A549 (cell line): ENCODE measurements at regions of chr15 and their contacts with region 1.

Region 1: GRCh38 chr15:84716036-84716799 is at the start of gene SEC11A:
- DNase-seq: peak; percentile 98 to 100
- ATAC-seq: peak; percentile 98 to 99
- H3K4me3 ChIP-seq: peak within 1 kb of the TSS; percentile 91
- H3K27ac ChIP-seq: peak within 1 kb of the TSS; percentile 91 to 99
- H3K4me1 ChIP-seq: peaks cover 19% of the 10 kb centered on the region
- CTCF ChIP-seq: no peak
- EP300 ChIP-seq: no peak
- POLR2A ChIP-seq: peak; percentile 94
- RAD21 ChIP-seq: no peak; a peak in 2 of 5 replicates
- polyA plus RNA-seq, gene SEC11A: 237 and 490 TPM in 2 replicates

Region 2: GRCh38 chr15:84633311-84634227 is 82.6 kb before region 1 on chr15:
- CTCF ChIA-PET with region 1: no interaction called
- POLR2A ChIA-PET with region 1: interaction called, 12 read pairs
- DNase-seq: peak in 1 of 2 experiments; percentile 78
- ATAC-seq: peak; percentile 72 to 77
- H3K4me3 ChIP-seq: peak overlapping the region; percentile 51
- H3K27ac ChIP-seq: peak overlapping the region; percentile 63 to 87
- H3K4me1 ChIP-seq: peaks cover 24% of the 10 kb centered on the region; the same call in 2 of the 3 replicates
- CTCF ChIP-seq: peak; percentile 31; the same call in 2 of the 3 replicates
- EP300 ChIP-seq: no peak
- POLR2A ChIP-seq: peak; percentile 35
- RAD21 ChIP-seq: no peak; a peak in 2 of 5 replicates

Region 3: DNA sequence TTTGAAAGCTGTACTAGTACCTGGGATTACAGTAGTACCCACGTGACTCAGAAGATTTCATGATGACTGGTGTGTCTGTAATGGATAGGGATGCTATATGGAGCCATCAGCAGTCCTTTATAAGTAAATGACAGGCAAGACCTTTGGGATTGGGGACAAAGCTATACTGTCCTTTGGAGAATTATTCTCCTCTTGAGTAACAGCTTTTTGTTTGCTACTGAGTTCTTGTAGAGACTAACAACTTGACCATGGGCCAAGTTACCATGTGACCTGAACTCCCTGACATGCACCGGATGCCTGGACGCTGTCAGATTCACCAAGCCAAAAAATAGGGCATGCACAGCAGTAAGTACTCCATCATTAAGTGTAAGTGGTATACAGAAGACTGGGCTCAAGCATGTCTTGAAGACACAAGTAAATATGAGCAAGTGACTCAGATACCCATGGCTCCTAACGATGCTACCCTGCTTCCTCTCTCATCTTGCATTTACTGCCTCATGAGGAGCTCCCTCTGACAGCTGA is 13.2 kb before region 1 on chr15:
- CTCF ChIA-PET with region 1: interaction called, 6 read pairs
- POLR2A ChIA-PET with region 1: interaction called, 20 read pairs
- DNase-seq: no peak
- ATAC-seq: peak; percentile 23 to 37; a peak in 3 of 6 replicates
- H3K4me3 ChIP-seq: no peak overlapping the region
- H3K27ac ChIP-seq: no peak overlapping the region
- H3K4me1 ChIP-seq: peaks cover 24% of the 10 kb centered on the region
- CTCF ChIP-seq: no peak
- EP300 ChIP-seq: no peak
- POLR2A ChIP-seq: no peak
- RAD21 ChIP-seq: no peak

Region 4: GRCh38 chr15:84734794-84735479 is 18.7 kb after region 1 on chr15:
- CTCF ChIA-PET with region 1: interaction called, 27 read pairs
- POLR2A ChIA-PET with region 1: interaction called, 119 read pairs
- DNase-seq: peak; percentile 88 to 93
- ATAC-seq: peak; percentile 88 to 95
- H3K4me3 ChIP-seq: peak overlapping the region; percentile 7; the same call in 2 of the 3 replicates
- H3K27ac ChIP-seq: peak overlapping the region; percentile 82 to 91
- H3K4me1 ChIP-seq: peaks cover 41% of the 10 kb centered on the region
- CTCF ChIP-seq: no peak
- EP300 ChIP-seq: peak in 1 of 2 experiments; percentile 43; a peak in 2 of 5 replicates
- POLR2A ChIP-seq: peak; percentile 35
- RAD21 ChIP-seq: peak in 1 of 2 experiments; percentile 36; a peak in 2 of 5 replicates

Region 5: DNA sequence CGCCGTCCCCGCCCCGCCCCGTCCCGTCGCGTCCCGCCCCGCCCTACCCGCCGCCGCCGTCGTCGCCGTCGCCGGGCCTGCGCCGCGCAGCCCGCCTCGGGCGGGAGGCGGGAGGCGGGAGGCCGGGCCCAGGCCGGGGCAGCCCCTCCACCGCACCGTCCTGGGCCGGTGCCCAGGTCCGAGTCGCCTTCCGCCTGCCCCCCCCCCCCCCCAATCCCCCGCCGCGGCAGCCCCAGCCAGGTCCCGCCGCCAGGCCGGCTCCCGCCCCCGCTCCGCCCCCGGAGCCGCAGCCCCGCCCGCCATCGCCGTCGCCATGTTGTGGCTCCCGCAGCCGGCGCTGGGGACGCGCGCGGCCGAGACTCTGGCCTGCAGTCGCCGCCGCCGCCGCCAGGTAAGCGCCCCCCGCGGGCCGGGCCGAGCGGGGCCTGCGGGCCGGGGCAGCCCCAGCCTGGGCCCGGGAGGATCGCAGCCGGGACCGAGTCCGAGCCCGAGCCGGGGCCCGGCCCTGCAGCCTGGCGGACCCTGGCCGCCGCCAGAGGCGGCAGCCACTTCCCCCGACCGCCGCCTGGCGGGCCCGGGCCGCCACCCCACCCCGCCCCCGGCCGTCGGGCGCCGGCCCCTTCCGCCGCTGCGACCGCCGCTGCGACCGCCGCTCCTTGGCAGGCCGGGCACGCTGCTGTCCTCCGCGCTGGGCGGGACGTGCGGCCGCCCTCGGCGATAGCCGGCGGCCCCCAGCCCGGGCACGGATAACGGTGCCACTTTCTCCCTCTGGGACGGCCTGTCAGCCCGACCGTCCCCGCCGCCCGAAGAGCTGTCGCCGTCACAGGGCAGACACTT is 32.3 kb after region 1 on chr15 and contains the start of gene ZNF592:
- CTCF ChIA-PET with region 1: interaction called, 4 read pairs
- POLR2A ChIA-PET with region 1: interaction called, 23 read pairs
- DNase-seq: peak; percentile 60 to 81
- ATAC-seq: peak; percentile 58 to 76
- H3K4me3 ChIP-seq: peak within 1 kb of the TSS; percentile 92
- H3K27ac ChIP-seq: peak within 1 kb of the TSS; percentile 96 to 98
- H3K4me1 ChIP-seq: peaks cover 62% of the 10 kb centered on the region
- CTCF ChIP-seq: peak; percentile 63
- EP300 ChIP-seq: no peak
- POLR2A ChIP-seq: peak; percentile 68
- RAD21 ChIP-seq: peak in 1 of 2 experiments; percentile 41; a peak in 1 of 5 replicates
- polyA plus RNA-seq, gene ZNF592: 12.4 and 15.6 TPM in 2 replicates